Dorsolateral prefrontal cortex (tissue), 120 donors: ENCODE measurements at regions of chr17 and their contacts with region 1.

Region 1: GRCh38 chr17:32142038-32142856 is at the start of gene RHOT1:
- DNase-seq: peak; percentile 54 to 80 (median 70)
- H3K4me3 ChIP-seq: peak within 1 kb of the TSS; percentile 55 to 96 (median 86)
- H3K27ac ChIP-seq: peak within 1 kb of the TSS; percentile 73 to 99 (median 94)
- H3K27me3 ChIP-seq: no peaks in the 10 kb centered on the region
- CTCF ChIP-seq: peak in 55 of 56 donors; percentile 33 to 76 (median 64)
- total RNA-seq, gene RHOT1: 56.2 to 102 (median 73.5) TPM

Region 2: GRCh38 chr17:32006957-32007462 is 135.2 kb before region 1 on chr17 and contains the start of gene LRRC37B:
- intact Hi-C with region 1: loop called (anchors 2 to 5 kb)
- DNase-seq: peak; percentile 72 to 92 (median 86)
- H3K4me3 ChIP-seq: peak within 1 kb of the TSS; percentile 64 to 95 (median 80)
- H3K27ac ChIP-seq: peak within 1 kb of the TSS in 58 of 59 donors; percentile 17 to 94 (median 84)
- H3K27me3 ChIP-seq: no peaks in the 10 kb centered on the region
- CTCF ChIP-seq: peak; percentile 72 to 99 (median 92)
- total RNA-seq, gene LRRC37B: 35.2 to 99.1 (median 63.5) TPM

Region 3: DNA sequence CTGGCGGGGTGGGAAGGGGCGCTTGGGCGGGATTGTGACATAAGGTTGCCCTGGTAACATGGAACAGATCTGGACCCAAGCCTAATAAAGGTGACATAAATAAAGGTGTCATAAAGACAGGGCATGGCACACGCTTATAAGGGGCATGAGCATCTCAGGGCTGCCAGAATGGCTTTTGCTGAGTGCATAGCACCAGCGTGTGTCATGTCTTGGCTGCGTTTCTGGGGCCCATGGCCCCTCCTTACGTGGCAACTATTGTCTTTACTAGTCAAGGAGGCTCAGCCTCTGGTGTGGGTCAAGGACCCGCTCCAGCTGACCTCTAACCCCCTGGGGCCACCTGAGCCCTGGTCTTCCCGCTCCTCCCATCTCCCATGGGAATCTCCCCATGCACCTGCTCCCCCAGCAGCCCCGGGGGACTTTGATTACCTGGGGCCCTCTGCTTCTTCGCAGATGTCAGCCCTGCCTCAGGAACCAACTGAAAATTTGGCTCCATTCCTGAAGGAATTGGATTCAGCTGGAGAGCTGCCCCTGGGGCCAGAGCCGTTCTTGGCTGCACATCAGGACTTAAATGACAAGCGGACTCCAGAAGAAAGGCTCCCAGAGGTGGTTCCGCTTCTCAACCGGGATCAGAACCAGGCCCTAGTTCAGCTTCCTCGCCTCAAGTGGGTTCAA is 121.2 kb before region 1 on chr17:
- intact Hi-C with region 1: no loop called
- DNase-seq: no peak
- H3K4me3 ChIP-seq: no peak overlapping the region
- H3K27ac ChIP-seq: peak overlapping the region in 7 of 59 donors; percentile 6 to 77 (median 31)
- H3K27me3 ChIP-seq: no peaks in the 10 kb centered on the region
- CTCF ChIP-seq: no peak

Region 4: DNA sequence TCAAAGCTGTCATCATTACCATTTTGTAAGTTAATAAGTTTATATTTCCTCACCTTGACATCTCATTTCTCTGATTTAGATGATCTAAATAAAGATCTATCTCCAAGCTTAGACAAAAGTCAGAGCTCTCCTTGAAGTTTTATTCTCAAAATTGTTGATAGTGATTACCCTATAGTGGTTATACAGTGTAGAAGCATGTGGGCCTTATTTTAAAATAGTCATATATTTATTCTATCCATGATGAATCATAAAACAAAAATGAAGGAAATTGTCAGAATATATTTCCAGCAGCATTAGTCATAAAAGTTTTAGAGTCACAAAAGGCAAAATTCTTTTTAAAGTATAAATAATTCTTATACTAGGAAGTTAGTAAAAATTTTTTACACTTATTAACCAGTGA is 49.1 kb after region 1 on chr17:
- intact Hi-C with region 1: no loop called
- DNase-seq: no peak
- H3K4me3 ChIP-seq: no peak overlapping the region
- H3K27ac ChIP-seq: no peak overlapping the region
- H3K27me3 ChIP-seq: no peaks in the 10 kb centered on the region
- CTCF ChIP-seq: no peak

Region 5: DNA sequence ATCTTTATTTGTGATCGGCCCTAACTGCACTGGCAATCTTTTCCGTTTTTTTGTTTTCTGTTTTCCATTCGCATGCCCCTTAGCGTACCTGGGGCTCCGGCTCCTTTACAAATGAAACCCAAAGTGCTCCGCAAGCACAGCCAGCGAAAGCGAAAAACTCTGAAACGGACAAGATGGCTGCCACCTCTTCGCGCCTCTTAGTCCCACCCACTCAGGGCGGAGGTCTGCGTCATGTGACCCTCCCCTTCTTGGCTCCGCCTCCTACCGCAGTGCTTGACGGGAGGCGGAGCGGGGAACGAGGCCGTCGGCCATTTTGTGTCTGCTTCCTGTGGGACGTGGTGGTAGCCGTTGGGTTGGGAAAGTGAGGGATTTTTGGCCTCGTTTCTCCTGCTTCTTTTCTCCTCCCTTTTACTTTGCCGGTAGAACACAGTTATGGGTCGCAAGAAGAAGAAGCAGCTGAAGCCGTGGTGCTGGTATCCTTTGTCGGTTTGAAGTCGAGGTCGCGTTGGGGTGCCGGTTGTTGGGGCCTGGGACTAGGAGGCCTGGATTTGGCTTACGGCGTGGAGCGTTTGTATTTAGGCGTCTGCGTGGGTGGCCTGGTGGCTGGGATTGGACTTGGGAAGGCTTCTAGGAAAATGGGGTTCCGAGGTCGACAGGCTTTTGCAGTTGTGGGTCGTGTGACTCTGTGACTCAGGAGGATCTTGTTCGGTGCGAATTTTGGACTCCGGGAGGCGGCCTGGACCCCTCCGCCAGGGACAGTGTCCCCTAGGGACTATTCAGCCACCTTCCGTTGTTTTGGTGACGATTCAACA is 207.8 kb after region 1 on chr17 and contains the start of gene ZNF207:
- intact Hi-C with region 1: loop called (anchors 10 kb)
- DNase-seq: peak; percentile 89 to 95 (median 93)
- H3K4me3 ChIP-seq: peak within 1 kb of the TSS; percentile 59 to 99 (median 89)
- H3K27ac ChIP-seq: peak within 1 kb of the TSS; percentile 76 to 99 (median 95)
- H3K27me3 ChIP-seq: no peaks in the 10 kb centered on the region
- CTCF ChIP-seq: peak in 25 of 56 donors; percentile 3 to 52 (median 29)
- total RNA-seq, gene ZNF207: 116 to 206 (median 155) TPM